ENCODE measurements at regions of chr14 and their contacts with region 1.

Region 1: GRCh38 chr14:61730756-61731373 is 31.4 kb upstream of the SNAPC1 start:
- DNase-seq: no peak
- ATAC-seq: no peak
- H3K4me3 ChIP-seq: no peak overlapping the region
- H3K27ac ChIP-seq: no peak overlapping the region
- H3K4me1 ChIP-seq: no peaks in the 10 kb centered on the region
- H3K27me3 ChIP-seq: no peaks in the 10 kb centered on the region
- CTCF ChIP-seq: peak; percentile 30 to 51 (median 41); a peak in 4 of 6 replicates
- POLR2A ChIP-seq: no peak
- RAD21 ChIP-seq: peak; percentile 61

Region 2: DNA sequence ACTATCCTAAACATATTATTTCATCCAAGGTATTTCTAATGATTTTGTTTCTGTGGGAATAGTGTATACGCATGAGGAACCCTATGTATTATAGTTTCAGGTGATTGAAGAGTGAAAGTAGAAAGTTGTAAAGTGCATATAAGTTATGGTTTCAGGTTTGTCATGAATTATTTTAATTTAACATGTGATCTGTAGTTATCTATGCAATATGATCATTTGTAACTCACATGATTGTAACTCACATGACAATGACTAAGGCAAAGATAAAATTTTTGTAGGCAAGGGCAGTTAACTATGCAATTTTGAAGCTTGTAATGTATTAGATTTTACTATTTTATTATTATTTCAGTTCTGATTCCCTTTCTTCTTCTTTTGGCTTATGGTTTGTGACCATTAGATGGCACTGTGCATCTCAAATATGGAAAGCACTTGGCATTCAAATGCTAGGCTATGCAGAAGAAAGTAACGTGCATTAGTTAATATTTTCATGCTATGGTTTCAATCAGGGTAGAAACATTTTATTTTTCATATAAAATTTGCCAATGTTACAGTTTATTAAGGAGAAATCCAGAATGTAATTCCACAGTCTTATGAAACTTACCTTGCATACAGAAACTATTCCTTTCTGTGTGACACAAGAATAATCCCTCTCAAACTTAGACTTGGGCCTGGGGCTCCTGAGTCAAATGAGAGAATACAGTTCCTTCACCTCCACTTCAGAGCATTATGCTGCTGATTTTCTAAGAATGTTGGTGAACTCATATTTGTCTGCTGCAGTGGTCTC is 434.0 kb before region 1 on chr14:
- CTCF ChIA-PET with region 1: no interaction called
- POLR2A ChIA-PET with region 1: no interaction called
- RAD21 ChIA-PET with region 1: no interaction called
- intact Hi-C with region 1: loop called (anchors 5 kb)
- DNase-seq: peak; percentile 27
- ATAC-seq: peak; percentile 67
- H3K4me3 ChIP-seq: no peak overlapping the region
- H3K27ac ChIP-seq: no peak overlapping the region
- H3K4me1 ChIP-seq: no peaks in the 10 kb centered on the region
- H3K27me3 ChIP-seq: no peaks in the 10 kb centered on the region
- CTCF ChIP-seq: peak; percentile 64 to 73 (median 68); a peak in 5 of 6 replicates
- POLR2A ChIP-seq: no peak
- RAD21 ChIP-seq: peak; percentile 82

Region 3: DNA sequence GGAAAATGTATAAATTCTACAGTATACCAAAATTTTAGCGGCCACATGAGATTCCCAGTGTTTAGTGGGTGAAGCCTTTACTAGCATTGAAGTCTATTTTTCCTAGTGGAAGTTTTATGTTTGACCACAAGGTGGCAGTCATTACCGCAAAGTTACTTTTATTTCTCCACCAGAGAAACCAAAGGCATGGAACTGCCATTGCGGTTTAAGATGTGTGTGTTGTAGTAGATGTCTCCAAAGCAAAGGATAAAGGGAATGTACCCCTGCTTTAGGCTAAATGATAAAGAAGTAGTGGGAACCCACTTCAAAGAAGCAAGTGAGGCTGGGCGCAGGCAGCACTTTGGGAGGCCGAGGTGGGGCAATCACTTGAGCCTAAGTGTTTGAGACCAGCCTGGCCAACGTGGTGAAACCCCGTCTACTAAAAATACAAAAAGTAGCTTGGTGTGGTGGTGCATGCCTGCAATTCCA is 269.0 kb before region 1 on chr14:
- CTCF ChIA-PET with region 1: interaction called, 6 read pairs
- POLR2A ChIA-PET with region 1: no interaction called
- RAD21 ChIA-PET with region 1: no interaction called
- intact Hi-C with region 1: loop called (anchors 1 kb)
- DNase-seq: peak; percentile 34
- ATAC-seq: peak; percentile 70
- H3K4me3 ChIP-seq: no peak overlapping the region
- H3K27ac ChIP-seq: no peak overlapping the region
- H3K4me1 ChIP-seq: peaks cover 0 to 7% of the 10 kb centered on the region in 2 experiments; a peak in 2 of 4 replicates
- H3K27me3 ChIP-seq: no peaks in the 10 kb centered on the region
- CTCF ChIP-seq: peak; percentile 60 to 83 (median 69); a peak in 5 of 6 replicates
- POLR2A ChIP-seq: no peak
- RAD21 ChIP-seq: peak; percentile 83

Region 4: GRCh38 chr14:61475316-61475715 is 255.5 kb before region 1 on chr14:
- CTCF ChIA-PET with region 1: interaction called, 6 read pairs
- POLR2A ChIA-PET with region 1: interaction called, 3 read pairs
- RAD21 ChIA-PET with region 1: no interaction called
- intact Hi-C with region 1: loop called (anchors 1 kb)
- DNase-seq: peak; percentile 56
- ATAC-seq: peak; percentile 62
- H3K4me3 ChIP-seq: no peak overlapping the region
- H3K27ac ChIP-seq: no peak overlapping the region
- H3K4me1 ChIP-seq: peaks cover 47 to 54% of the 10 kb centered on the region in 2 experiments
- H3K27me3 ChIP-seq: no peaks in the 10 kb centered on the region
- CTCF ChIP-seq: peak; percentile 56 to 89 (median 65); a peak in 5 of 6 replicates
- POLR2A ChIP-seq: no peak
- RAD21 ChIP-seq: peak; percentile 85

Region 5: GRCh38 chr14:61803755-61804154 is 72.9 kb after region 1 on chr14:
- CTCF ChIA-PET with region 1: no interaction called
- POLR2A ChIA-PET with region 1: no interaction called
- RAD21 ChIA-PET with region 1: no interaction called
- intact Hi-C with region 1: no loop called
- DNase-seq: no peak
- ATAC-seq: no peak
- H3K4me3 ChIP-seq: no peak overlapping the region
- H3K27ac ChIP-seq: no peak overlapping the region
- H3K4me1 ChIP-seq: no peaks in the 10 kb centered on the region
- H3K27me3 ChIP-seq: no peaks in the 10 kb centered on the region
- CTCF ChIP-seq: no peak
- POLR2A ChIP-seq: no peak
- RAD21 ChIP-seq: no peak

Measured in HCT116 (cell line).